ENCODE measurements at regions of chr12 and their contacts with region 1.

Region 1: DNA sequence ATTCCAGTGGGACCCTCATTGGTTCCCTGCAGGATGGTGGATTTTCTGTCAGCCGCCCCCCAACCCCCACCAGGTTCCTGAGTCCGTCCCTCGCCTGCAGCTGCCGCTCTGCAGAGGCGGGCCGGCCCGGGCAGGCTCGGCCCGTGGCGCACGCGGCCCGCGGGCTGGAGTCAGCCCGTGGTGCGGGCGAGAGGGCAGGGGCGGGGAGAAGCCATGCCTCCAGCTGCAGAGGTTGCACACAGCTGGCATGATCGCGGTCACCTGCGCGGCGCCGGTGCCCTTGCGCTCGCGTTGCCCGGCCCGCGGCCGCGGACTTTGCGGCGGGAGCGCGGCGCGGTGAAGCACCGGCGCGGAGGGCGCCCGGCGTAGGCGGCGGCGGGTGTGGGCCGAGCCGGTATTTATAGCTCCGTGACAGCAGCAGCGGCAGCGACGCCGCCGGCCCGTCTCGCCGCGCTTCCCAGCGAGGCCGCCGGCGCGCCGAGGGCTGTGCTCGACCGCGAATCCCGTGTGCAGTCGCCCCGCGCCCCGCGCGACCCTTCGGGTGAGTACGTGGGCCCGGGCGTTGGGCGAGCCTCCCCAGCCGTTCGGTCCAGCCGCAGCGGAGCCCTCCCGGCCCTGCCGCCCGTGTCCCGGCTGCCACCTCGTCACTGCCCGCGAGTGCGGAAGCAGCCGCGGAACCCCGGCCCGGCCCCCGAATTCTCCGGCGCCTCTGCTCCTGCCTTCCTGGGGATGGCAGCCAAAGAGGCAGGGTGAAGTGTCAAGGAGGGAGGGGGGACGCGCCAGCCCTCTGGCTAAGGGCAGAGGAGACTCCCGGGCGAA is at the start of gene TMEM117:
- DNase-seq: peak; percentile 61
- H3K4me3 ChIP-seq: peak within 1 kb of the TSS; percentile 83
- H3K27ac ChIP-seq: peak within 1 kb of the TSS; percentile 28
- H3K4me1 ChIP-seq: peaks cover 14% of the 10 kb centered on the region
- CTCF ChIP-seq: no peak
- total RNA-seq, gene TMEM117: 0.95 and 2.3 TPM in 2 replicates

Region 2: GRCh38 chr12:43758728-43759563 is 76.9 kb before region 1 on chr12 and contains the starts of genes IRAK4 and PUS7L:
- CTCF ChIA-PET with region 1: no interaction called
- POLR2A ChIA-PET with region 1: interaction called, 6 read pairs
- intact Hi-C with region 1: loop called (anchors 2 kb)
- DNase-seq: peak; percentile 99
- H3K4me3 ChIP-seq: peak within 1 kb of the TSS; percentile 76
- H3K27ac ChIP-seq: peak within 1 kb of the TSS; percentile 88
- H3K4me1 ChIP-seq: peaks cover 40% of the 10 kb centered on the region
- CTCF ChIP-seq: peak; percentile 43
- total RNA-seq, gene IRAK4: 17.3 and 17.9 TPM in 2 replicates
- total RNA-seq, gene PUS7L: 20.5 and 21.1 TPM in 2 replicates

Region 3: GRCh38 chr12:43816168-43816567 is 19.7 kb before region 1 on chr12:
- CTCF ChIA-PET with region 1: no interaction called
- POLR2A ChIA-PET with region 1: interaction called, 12 read pairs
- intact Hi-C with region 1: no loop called
- DNase-seq: no peak
- H3K4me3 ChIP-seq: no peak overlapping the region
- H3K27ac ChIP-seq: no peak overlapping the region
- H3K4me1 ChIP-seq: no peaks in the 10 kb centered on the region
- CTCF ChIP-seq: no peak

Measured in OCI-LY7 (cell line).